Sigmoid colon (tissue), 7 donors: ENCODE measurements at regions of chr4 and their contacts with region 1.

Region 1: DNA sequence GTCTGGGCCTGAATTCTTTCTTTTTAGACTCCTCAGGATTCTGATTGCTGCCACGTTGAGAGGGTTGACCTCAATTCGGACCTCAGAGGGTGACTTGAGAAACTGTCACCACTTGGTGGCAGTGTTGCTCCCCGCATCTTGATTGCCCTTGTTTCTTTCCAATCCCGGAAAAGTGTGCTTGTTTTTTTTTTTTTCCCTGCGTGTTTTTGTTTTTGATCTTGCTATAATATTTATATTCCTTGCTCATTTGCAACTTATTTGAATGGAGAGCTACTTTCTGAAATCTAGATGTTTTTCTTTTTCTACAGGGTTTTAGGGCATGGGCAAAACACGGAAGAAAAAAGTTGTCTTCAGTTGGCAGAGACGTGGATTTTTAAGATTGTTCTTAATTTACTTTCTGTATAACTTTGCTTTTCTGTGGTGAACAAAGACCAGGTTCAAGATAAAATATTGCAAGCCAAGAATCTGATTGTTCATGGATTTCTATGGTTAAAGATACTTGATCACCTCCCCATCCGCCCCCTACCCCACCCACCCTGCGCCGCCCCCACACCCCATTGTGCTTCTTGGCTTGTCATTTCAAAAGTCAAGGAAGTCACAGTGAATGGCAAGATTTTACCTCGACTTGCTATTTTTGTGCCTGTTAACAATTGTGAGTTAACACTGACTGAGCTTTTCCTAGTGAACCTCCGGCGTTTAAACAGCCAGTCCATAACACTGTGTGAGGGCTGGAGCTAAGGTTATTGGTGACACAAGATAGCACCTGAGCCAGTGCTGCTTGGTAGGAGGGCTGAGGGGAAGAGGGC is 102.1 kb downstream of the PTTG2 start:
- DNase-seq: peak; percentile 90
- H3K4me3 ChIP-seq: peak overlapping the region; percentile 5 to 31 (median 27)
- H3K27ac ChIP-seq: peak overlapping the region; percentile 71 to 80 (median 73)
- H3K4me1 ChIP-seq: peaks cover 0 to 64% (median 44%) of the 10 kb centered on the region in 4 donors
- H3K27me3 ChIP-seq: no peaks in the 10 kb centered on the region
- CTCF ChIP-seq: peak; percentile 71 to 82 (median 77)
- EP300 ChIP-seq: no peak
- POLR2A ChIP-seq: no peak

Region 2: GRCh38 chr4:37928426-37929416 is 133.6 kb before region 1 on chr4:
- intact Hi-C with region 1: no loop called
- DNase-seq: no peak
- H3K4me3 ChIP-seq: no peak overlapping the region
- H3K27ac ChIP-seq: peak overlapping the region in 3 of 4 donors; percentile 38 to 60 (median 60)
- H3K4me1 ChIP-seq: peaks cover 0 to 60% (median 35%) of the 10 kb centered on the region in 4 donors
- H3K27me3 ChIP-seq: no peaks in the 10 kb centered on the region
- CTCF ChIP-seq: no peak
- EP300 ChIP-seq: no peak
- POLR2A ChIP-seq: no peak

Region 3: GRCh38 chr4:38132107-38132673 is 69.9 kb after region 1 on chr4:
- intact Hi-C with region 1: loop called (anchors 5 kb)
- DNase-seq: peak; percentile 89
- H3K4me3 ChIP-seq: no peak overlapping the region
- H3K27ac ChIP-seq: peak overlapping the region; percentile 66 to 85 (median 74)
- H3K4me1 ChIP-seq: peaks cover 0 to 63% (median 58%) of the 10 kb centered on the region in 4 donors
- H3K27me3 ChIP-seq: no peaks in the 10 kb centered on the region
- CTCF ChIP-seq: no peak
- EP300 ChIP-seq: peak in 3 of 4 donors; percentile 36 to 86 (median 37)
- POLR2A ChIP-seq: no peak

Region 4: GRCh38 chr4:38179690-38180377 is 117.5 kb after region 1 on chr4:
- intact Hi-C with region 1: loop called (anchors 5 kb)
- DNase-seq: peak; percentile 87
- H3K4me3 ChIP-seq: no peak overlapping the region
- H3K27ac ChIP-seq: peak overlapping the region in 2 of 4 donors; percentile 6 to 43
- H3K4me1 ChIP-seq: peaks cover 0 to 19% (median 8%) of the 10 kb centered on the region in 4 donors
- H3K27me3 ChIP-seq: no peaks in the 10 kb centered on the region
- CTCF ChIP-seq: peak; percentile 67 to 91 (median 86)
- EP300 ChIP-seq: no peak
- POLR2A ChIP-seq: no peak

Region 5: DNA sequence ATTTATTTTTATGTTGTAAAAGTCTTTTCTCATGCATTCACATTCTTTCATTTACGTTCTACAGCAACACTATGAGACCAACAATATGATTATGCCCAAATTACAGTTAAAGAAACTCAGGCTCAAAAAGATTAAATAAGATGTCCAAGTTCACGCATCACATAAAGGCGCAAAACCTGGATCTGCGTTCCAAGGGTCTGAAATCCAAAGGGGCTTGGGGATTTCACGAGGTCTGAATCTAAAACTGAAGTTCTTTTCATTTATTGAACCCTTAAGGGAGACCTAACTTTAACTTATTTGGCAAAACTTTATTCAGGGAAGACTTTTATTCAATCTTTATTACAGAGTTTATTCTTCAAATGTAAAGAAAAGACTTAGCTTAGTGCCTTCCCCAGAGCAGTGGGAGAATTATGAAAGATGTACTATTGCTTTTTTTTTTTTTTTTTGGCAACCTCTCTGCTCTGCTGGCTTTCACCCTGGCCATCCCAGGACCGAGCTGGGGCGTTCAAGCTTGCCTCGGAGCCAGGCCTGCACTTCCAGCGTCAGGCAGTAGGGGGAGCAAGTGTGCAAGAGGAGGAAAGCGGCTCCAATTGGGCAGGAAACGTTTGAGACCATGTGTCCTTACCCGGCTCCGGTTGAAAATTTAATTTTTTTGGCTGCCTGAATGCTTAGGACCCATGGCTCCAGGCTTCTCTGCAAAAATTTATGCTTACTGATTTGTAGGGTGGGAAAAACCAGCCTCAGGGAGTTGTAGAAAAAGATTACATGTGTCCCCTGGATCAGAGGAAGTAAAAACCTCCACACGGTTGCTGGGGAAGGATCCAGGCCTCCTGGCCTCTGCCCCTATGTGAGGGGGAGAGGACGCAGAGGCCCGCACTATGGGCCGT is 257.4 kb after region 1 on chr4:
- intact Hi-C with region 1: loop called (anchors 2 kb)
- DNase-seq: peak; percentile 97
- H3K4me3 ChIP-seq: peak overlapping the region; percentile 7 to 36 (median 26)
- H3K27ac ChIP-seq: peak overlapping the region; percentile 74 to 91 (median 85)
- H3K4me1 ChIP-seq: peaks cover 0 to 21% (median 17%) of the 10 kb centered on the region in 4 donors
- H3K27me3 ChIP-seq: no peaks in the 10 kb centered on the region
- CTCF ChIP-seq: peak; percentile 93 to 99 (median 98)
- EP300 ChIP-seq: no peak
- POLR2A ChIP-seq: no peak

Region 6: DNA sequence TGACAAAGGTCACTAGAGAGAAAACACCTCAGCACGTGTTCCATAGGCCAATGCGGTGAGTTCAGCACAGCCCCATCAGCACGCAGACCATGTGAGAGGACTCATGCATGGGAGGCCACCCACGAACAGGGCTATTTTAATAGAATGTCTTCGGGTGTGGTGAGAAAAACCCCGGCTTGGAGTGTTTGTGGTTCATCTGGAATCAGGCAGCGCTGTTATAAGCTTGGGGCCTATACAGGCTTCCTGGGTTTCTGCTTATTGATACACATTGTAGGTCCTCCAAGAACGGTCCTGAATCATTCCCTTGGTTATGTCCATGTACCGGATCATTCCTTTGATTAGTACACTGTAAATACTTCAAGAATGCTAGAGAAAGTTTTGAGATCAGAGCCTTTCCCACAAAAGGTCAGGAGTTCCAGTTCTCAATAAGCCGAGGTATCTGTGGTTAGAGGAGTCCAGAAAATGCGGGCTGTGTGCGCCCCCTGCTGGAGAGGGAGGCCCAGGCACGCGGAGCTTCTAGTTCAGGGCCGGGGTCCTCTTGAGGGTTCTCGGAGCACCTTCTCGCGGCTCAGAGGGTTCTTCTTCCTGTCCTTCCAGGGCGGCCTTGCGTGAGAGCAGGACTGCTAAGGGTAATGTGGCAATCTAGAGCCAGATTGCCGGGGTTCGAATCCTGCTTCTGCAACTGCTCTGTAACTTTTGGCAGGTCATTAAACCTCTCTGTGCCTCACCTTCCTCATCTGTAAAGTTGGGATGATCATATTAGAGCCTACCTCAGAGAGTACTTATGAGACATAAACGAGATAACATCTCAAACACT is 668.7 kb after region 1 on chr4:
- intact Hi-C with region 1: loop called (anchors 1 kb)
- DNase-seq: peak; percentile 87
- H3K4me3 ChIP-seq: no peak overlapping the region
- H3K27ac ChIP-seq: no peak overlapping the region
- H3K4me1 ChIP-seq: peaks cover 0 to 9% (median 7%) of the 10 kb centered on the region in 4 donors
- H3K27me3 ChIP-seq: no peaks in the 10 kb centered on the region
- CTCF ChIP-seq: peak; percentile 91 to 98 (median 97)
- EP300 ChIP-seq: peak in 1 of 4 donors; percentile 4
- POLR2A ChIP-seq: no peak